ENCODE measurements at regions of chr11 and their contacts with region 1.

Region 1: GRCh38 chr11:111841370-111842053 is 29.9 kb downstream of the ALG9 start:
- DNase-seq: peak; percentile 94
- H3K4me3 ChIP-seq: no peak overlapping the region
- H3K27ac ChIP-seq: peak overlapping the region in 1 of 4 donors; percentile 29
- H3K4me1 ChIP-seq: peaks cover 0 to 9% (median 3%) of the 10 kb centered on the region in 4 donors
- H3K27me3 ChIP-seq: no peaks in the 10 kb centered on the region
- CTCF ChIP-seq: peak; percentile 83 to 87 (median 86)
- EP300 ChIP-seq: no peak
- POLR2A ChIP-seq: no peak

Region 2: GRCh38 chr11:111565114-111565720 is 276.3 kb before region 1 on chr11:
- intact Hi-C with region 1: loop called (anchors 2 kb)
- DNase-seq: peak; percentile 78
- H3K4me3 ChIP-seq: no peak overlapping the region
- H3K27ac ChIP-seq: no peak overlapping the region
- H3K4me1 ChIP-seq: peaks cover 0 to 8% (median 0%) of the 10 kb centered on the region in 4 donors
- H3K27me3 ChIP-seq: no peaks in the 10 kb centered on the region
- CTCF ChIP-seq: peak; percentile 66 to 89 (median 76)
- EP300 ChIP-seq: no peak
- POLR2A ChIP-seq: no peak

Region 3: DNA sequence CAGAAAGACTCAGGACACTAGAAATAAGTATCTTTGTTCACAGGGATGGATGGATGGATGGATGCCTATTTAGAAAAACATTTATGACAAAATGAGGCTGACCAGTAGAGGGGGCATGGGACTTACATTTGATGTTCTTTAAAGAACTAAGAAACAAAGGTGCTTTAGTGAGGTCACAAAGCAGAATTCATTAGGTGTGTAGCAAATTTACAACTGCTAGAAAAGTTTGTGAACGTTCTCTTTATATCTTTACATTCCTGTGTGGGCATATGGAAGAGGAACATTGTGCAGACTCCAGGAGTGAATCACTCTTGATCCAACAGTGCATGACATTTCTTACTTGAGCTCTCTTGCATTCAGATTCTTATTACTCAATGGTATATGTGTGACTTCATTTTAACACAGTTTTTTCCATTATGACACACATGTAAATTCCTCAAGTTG is 255.1 kb before region 1 on chr11:
- intact Hi-C with region 1: loop called (anchors 1 kb)
- DNase-seq: no peak
- H3K4me3 ChIP-seq: no peak overlapping the region
- H3K27ac ChIP-seq: no peak overlapping the region
- H3K4me1 ChIP-seq: peaks cover 0 to 4% (median 0%) of the 10 kb centered on the region in 4 donors
- H3K27me3 ChIP-seq: no peaks in the 10 kb centered on the region
- CTCF ChIP-seq: peak; percentile 38 to 54 (median 51)
- EP300 ChIP-seq: no peak
- POLR2A ChIP-seq: no peak

Region 4: GRCh38 chr11:111777094-111778046 is 64.1 kb before region 1 on chr11:
- intact Hi-C with region 1: loop called (anchors 5 kb)
- DNase-seq: no peak
- H3K4me3 ChIP-seq: no peak overlapping the region
- H3K27ac ChIP-seq: peak overlapping the region in 1 of 4 donors; percentile 6
- H3K4me1 ChIP-seq: no peaks in the 10 kb centered on the region
- H3K27me3 ChIP-seq: no peaks in the 10 kb centered on the region
- CTCF ChIP-seq: peak; percentile 69 to 83 (median 76)
- EP300 ChIP-seq: no peak
- POLR2A ChIP-seq: no peak